Caki2 (cell line): ENCODE measurements at regions of chr12 and their contacts with region 1.

Region 1: GRCh38 chr12:53190108-53190729 is 9.5 kb upstream of the CSAD start:
- DNase-seq: peak; percentile 41

Region 2: GRCh38 chr12:53131844-53132243 is 58.4 kb before region 1 on chr12:
- in situ Hi-C with region 1: loop called (anchors 10 kb)
- DNase-seq: no peak